ENCODE measurements at regions of chr15 and their contacts with region 1.

Region 1: GRCh38 chr15:48426044-48426443 is 94.8 kb downstream of the DUT start:
- DNase-seq: no peak
- ATAC-seq: no peak
- H3K4me3 Mint-ChIP-seq: no peak overlapping the region
- H3K27ac Mint-ChIP-seq: no peak overlapping the region
- H3K4me1 Mint-ChIP-seq: no peaks in the 10 kb centered on the region
- H3K27me3 Mint-ChIP-seq: no peaks in the 10 kb centered on the region
- CTCF ChIP-seq: no peak

Region 2: GRCh38 chr15:48389691-48390143 is 36.3 kb before region 1 on chr15:
- CTCF ChIA-PET with region 1: no interaction called
- POLR2A ChIA-PET with region 1: no interaction called
- intact Hi-C with region 1: loop called (anchors 1 kb)
- DNase-seq: no peak
- ATAC-seq: no peak
- H3K4me3 Mint-ChIP-seq: no peak overlapping the region
- H3K27ac Mint-ChIP-seq: no peak overlapping the region
- H3K4me1 Mint-ChIP-seq: no peaks in the 10 kb centered on the region
- H3K27me3 Mint-ChIP-seq: peaks cover 12% of the 10 kb centered on the region
- CTCF ChIP-seq: no peak